Transverse colon (tissue), 4 donors: ENCODE measurements at regions of chr11 and their contacts with region 1.

Region 1: GRCh38 chr11:100687630-100688395 is 725 bp downstream of the ARHGAP42 start:
- DNase-seq: peak; percentile 65
- H3K4me3 ChIP-seq: peak overlapping the region; percentile 54 to 85 (median 80)
- H3K27ac ChIP-seq: peak overlapping the region; percentile 81 to 90 (median 84)
- H3K4me1 ChIP-seq: peaks cover 6 to 50% (median 9%) of the 10 kb centered on the region in 4 donors
- H3K27me3 ChIP-seq: no peaks in the 10 kb centered on the region
- CTCF ChIP-seq: peak; percentile 63 to 84 (median 66)
- EP300 ChIP-seq: no peak
- POLR2A ChIP-seq: no peak

Region 2: DNA sequence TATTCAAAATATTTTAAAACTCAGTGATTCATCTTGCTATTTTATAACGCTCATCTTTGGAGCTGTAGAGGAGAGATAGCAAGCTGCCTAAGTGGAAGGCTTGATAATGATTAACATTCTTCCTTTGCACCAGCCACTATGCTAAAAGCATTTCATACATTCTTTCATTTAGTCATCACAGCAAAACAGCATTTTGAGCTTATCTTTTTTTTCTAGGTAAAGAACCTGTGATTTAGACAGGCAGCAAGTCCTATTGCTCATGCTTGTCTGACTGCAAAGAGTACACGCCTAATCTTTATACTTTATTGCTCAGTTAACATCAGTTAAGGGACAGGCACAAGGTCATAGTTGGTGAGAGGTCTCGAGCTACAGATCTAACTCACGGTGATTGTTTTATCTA is 713.8 kb before region 1 on chr11:
- in situ Hi-C with region 1: no loop called
- intact Hi-C with region 1: no loop called
- DNase-seq: no peak
- H3K4me3 ChIP-seq: no peak overlapping the region
- H3K27ac ChIP-seq: no peak overlapping the region
- H3K4me1 ChIP-seq: no peaks in the 10 kb centered on the region
- H3K27me3 ChIP-seq: no peaks in the 10 kb centered on the region
- CTCF ChIP-seq: no peak
- EP300 ChIP-seq: no peak
- POLR2A ChIP-seq: no peak

Region 3: GRCh38 chr11:100619484-100619883 is 68.3 kb before region 1 on chr11:
- in situ Hi-C with region 1: no loop called
- intact Hi-C with region 1: no loop called
- DNase-seq: no peak
- H3K4me3 ChIP-seq: no peak overlapping the region
- H3K27ac ChIP-seq: no peak overlapping the region
- H3K4me1 ChIP-seq: no peaks in the 10 kb centered on the region
- H3K27me3 ChIP-seq: no peaks in the 10 kb centered on the region
- CTCF ChIP-seq: no peak
- EP300 ChIP-seq: no peak
- POLR2A ChIP-seq: no peak

Region 4: GRCh38 chr11:100629671-100630070 is 58.1 kb before region 1 on chr11:
- in situ Hi-C with region 1: no loop called
- intact Hi-C with region 1: no loop called
- DNase-seq: no peak
- H3K4me3 ChIP-seq: no peak overlapping the region
- H3K27ac ChIP-seq: no peak overlapping the region
- H3K4me1 ChIP-seq: peaks cover 0 to 38% (median 18%) of the 10 kb centered on the region in 4 donors
- H3K27me3 ChIP-seq: no peaks in the 10 kb centered on the region
- CTCF ChIP-seq: no peak
- EP300 ChIP-seq: no peak
- POLR2A ChIP-seq: no peak

Region 5: DNA sequence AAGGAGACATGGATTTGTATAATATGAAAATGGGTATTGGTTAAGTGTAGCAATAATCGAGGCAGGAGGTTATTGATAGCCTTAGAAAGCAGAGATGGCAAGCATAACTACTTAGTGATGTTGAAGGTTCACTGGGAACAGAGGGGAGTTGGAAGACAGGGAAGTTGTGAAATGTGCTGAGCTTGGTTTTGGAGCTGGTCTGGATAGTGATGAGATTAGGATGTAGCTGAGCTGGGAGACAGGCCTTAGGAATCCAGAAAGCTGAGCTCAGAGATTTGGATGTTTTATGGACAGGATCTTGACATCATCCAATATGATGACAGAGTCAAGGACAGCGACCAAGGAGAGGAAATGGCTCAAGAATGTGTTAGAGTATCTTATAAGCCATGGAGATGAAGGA is 112.4 kb after region 1 on chr11:
- in situ Hi-C with region 1: no loop called
- intact Hi-C with region 1: no loop called
- DNase-seq: no peak
- H3K4me3 ChIP-seq: no peak overlapping the region
- H3K27ac ChIP-seq: no peak overlapping the region
- H3K4me1 ChIP-seq: no peaks in the 10 kb centered on the region
- H3K27me3 ChIP-seq: no peaks in the 10 kb centered on the region
- CTCF ChIP-seq: no peak
- EP300 ChIP-seq: no peak
- POLR2A ChIP-seq: no peak

Region 6: DNA sequence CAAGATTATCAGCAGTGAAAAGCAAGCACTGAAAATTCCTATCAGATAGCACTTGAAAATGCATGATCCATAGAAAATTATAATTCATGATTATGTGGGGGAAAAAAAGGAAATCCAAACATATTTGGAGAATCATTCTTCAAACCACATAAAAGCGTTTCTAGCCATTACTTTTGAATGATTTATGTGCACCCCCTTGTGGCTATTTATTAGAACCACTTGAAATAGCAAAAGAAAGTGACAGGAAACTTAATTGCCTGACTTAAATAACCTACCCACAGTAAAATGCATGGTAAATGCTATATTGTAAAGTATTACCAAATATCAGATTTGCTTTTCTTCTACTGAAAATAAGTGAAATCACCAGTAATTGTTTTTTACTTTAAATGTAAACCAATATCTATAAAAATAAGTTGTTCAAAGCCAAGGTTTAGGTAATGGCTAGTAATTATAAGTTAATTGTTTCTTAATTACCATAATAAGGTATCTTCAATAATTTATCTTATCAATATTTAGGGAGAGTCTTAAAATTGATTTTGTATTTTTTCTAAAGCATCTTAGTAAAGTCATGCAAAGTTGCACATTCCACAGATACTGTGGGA is 167.8 kb after region 1 on chr11:
- in situ Hi-C with region 1: loop called in 3 of 4 experiments (anchors 10 to 25 kb)
- intact Hi-C with region 1: no loop called
- DNase-seq: no peak
- H3K4me3 ChIP-seq: no peak overlapping the region
- H3K27ac ChIP-seq: no peak overlapping the region
- H3K4me1 ChIP-seq: peaks cover 0 to 3% (median 0%) of the 10 kb centered on the region in 4 donors
- H3K27me3 ChIP-seq: no peaks in the 10 kb centered on the region
- CTCF ChIP-seq: peak; percentile 47 to 64 (median 59)
- EP300 ChIP-seq: no peak
- POLR2A ChIP-seq: no peak